ENCODE measurements at regions of chr4 and their contacts with region 1.

Region 1: DNA sequence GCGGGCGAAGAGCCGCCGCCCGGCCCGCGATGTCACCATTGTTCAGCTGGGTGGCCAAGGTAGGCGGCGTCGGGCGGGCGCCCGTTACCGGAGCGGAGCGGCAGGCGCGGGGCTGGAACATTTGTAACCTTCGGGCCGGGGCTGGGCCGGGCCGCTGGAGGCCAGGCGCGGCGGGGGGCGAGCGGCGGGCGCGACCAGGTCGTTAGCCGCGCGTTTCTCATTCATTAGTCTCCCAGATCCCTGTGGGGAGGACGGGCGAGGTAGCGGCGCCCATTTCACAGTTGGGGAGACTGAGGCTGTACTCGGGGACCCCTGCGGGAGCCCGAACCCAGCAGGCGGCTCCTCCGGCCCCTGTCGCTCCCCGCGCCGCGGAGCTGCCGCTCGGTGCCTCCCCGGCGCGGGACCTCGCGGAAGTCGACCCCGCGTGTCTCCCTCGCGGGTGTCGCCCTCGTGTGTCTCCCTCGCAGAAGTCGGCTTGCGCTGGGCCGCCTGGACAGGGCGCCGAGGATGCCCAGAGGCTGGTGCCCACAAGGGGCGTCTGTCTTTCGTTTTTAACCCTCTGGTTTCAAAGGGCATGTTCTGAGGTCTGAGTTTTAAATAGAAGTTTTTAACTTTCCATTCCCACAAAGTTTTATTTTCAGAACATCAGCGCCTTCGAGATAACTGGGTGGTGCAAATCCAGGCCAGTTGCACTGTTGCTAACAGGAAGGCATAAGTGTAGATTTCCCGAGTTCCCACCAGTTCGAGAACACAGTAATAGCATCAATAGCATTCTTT is 17.5 kb downstream of the PTTG2 start:
- DNase-seq: peak; percentile 48 to 90 (median 76)
- ATAC-seq: peak; percentile 73
- H3K4me3 ChIP-seq: peak overlapping the region; percentile 40 to 48
- H3K4me3 Mint-ChIP-seq: peak overlapping the region; percentile 87
- H3K27ac ChIP-seq: peak overlapping the region; percentile 57 to 66
- H3K27ac Mint-ChIP-seq: peak overlapping the region; percentile 74
- H3K4me1 ChIP-seq: peaks cover 18% of the 10 kb centered on the region
- H3K4me1 Mint-ChIP-seq: peaks cover 28% of the 10 kb centered on the region
- H3K27me3 ChIP-seq: no peaks in the 10 kb centered on the region
- H3K27me3 Mint-ChIP-seq: no peaks in the 10 kb centered on the region
- CTCF ChIP-seq: peak; percentile 65

Region 2: GRCh38 chr4:37793562-37793961 is 184.1 kb before region 1 on chr4:
- CTCF ChIA-PET with region 1: interaction called, 11 read pairs
- POLR2A ChIA-PET with region 1: no interaction called
- intact Hi-C with region 1: no loop called
- DNase-seq: peak in 4 of 9 experiments; percentile 18 to 61 (median 34)
- ATAC-seq: peak; percentile 66
- H3K4me3 ChIP-seq: no peak overlapping the region
- H3K4me3 Mint-ChIP-seq: no peak overlapping the region
- H3K27ac ChIP-seq: no peak overlapping the region
- H3K27ac Mint-ChIP-seq: no peak overlapping the region
- H3K4me1 ChIP-seq: no peaks in the 10 kb centered on the region
- H3K4me1 Mint-ChIP-seq: no peaks in the 10 kb centered on the region
- H3K27me3 ChIP-seq: no peaks in the 10 kb centered on the region
- H3K27me3 Mint-ChIP-seq: no peaks in the 10 kb centered on the region
- CTCF ChIP-seq: peak; percentile 65

Region 3: DNA sequence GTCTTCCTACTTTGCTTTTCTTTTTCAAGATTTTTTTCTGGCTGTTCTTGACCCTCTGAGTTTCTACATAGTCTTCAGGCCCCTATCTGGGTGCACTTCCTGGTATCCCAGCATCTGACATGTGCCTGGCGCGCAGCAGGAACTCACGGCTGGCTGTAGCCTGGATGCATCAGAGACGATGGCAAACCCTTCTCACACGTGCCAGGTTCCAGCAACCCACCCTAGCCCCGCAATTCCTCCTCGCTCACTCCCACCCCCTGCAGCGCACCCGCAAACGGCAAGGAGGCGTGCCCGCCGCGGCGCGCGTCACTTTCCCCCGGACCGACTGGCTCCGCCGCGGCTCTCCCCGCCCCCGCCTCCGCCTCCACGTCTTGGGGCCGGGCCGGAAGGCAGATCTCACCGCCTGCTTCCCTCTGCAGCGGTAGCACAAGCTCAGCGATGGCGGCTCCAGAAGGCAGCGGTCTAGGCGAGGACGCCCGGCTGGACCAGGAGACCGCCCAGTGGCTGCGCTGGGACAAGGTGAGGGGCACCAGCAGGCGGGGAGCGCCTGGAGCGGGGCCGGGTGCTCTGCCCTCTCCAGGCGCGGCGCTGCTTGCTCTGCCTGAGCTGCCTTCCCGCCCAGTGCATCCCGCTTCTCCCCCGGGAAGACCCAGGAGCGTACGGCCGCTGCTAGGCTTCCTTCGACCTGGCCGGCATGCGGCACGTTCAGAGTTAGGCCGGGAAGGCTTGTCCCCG is 151.2 kb before region 1 on chr4 and contains the start of gene PGM2:
- CTCF ChIA-PET with region 1: interaction called, 3 read pairs
- POLR2A ChIA-PET with region 1: interaction called, 7 read pairs
- intact Hi-C with region 1: loop called (anchors 1 kb)
- DNase-seq: peak; percentile 81 to 93 (median 89)
- ATAC-seq: peak; percentile 98
- H3K4me3 ChIP-seq: peak within 1 kb of the TSS; percentile 96 to 99
- H3K4me3 Mint-ChIP-seq: peak within 1 kb of the TSS; percentile 97
- H3K27ac ChIP-seq: peak within 1 kb of the TSS; percentile 76 to 79
- H3K27ac Mint-ChIP-seq: peak within 1 kb of the TSS; percentile 92
- H3K4me1 ChIP-seq: peaks cover 23% of the 10 kb centered on the region
- H3K4me1 Mint-ChIP-seq: peaks cover 53% of the 10 kb centered on the region
- H3K27me3 ChIP-seq: no peaks in the 10 kb centered on the region
- H3K27me3 Mint-ChIP-seq: no peaks in the 10 kb centered on the region
- CTCF ChIP-seq: no peak
- total RNA-seq, gene PGM2: 14.5 to 15.4 TPM

Region 4: GRCh38 chr4:38034986-38035882 is 57.6 kb after region 1 on chr4:
- CTCF ChIA-PET with region 1: interaction called, 4 read pairs
- POLR2A ChIA-PET with region 1: no interaction called
- intact Hi-C with region 1: loop called in 1 of 2 experiments (anchors 5 kb)
- DNase-seq: peak in 4 of 9 experiments; percentile 22 to 74 (median 60)
- ATAC-seq: peak; percentile 65
- H3K4me3 ChIP-seq: no peak overlapping the region
- H3K4me3 Mint-ChIP-seq: no peak overlapping the region
- H3K27ac ChIP-seq: no peak overlapping the region
- H3K27ac Mint-ChIP-seq: no peak overlapping the region
- H3K4me1 ChIP-seq: no peaks in the 10 kb centered on the region
- H3K4me1 Mint-ChIP-seq: no peaks in the 10 kb centered on the region
- H3K27me3 ChIP-seq: no peaks in the 10 kb centered on the region
- H3K27me3 Mint-ChIP-seq: no peaks in the 10 kb centered on the region
- CTCF ChIP-seq: peak; percentile 89